MCF 10A (cell line): ENCODE measurements at regions of chr1 and their contacts with region 1.

Region 1: DNA sequence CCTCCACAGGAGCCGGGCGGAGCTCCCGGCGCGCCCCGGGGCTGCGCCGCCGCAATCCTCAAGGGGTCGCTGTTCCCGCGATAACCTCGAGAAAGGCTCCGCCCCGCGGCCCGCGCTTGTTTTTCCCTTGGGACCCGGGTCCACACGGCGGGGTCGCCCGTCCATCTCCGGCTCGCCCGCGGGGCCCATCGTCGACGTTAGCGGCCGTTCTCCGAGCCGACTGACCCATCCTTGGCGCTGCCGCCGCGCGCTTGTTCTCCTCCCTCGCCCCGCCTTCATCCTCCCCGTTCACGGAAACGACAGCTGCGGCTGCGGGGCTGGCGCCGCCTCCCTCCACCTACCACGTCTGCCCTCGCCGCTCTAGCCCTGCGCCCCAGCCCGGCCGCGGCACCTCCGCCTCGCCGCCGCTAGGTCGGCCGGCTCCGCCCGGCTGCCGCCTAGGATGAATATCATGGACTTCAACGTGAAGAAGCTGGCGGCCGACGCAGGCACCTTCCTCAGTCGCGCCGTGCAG is at the start of gene SH3GLB1:
- DNase-seq: peak; percentile 90
- H3K4me3 Mint-ChIP-seq: peak within 1 kb of the TSS; percentile 97
- H3K27ac Mint-ChIP-seq: peak within 1 kb of the TSS; percentile 99
- H3K4me1 Mint-ChIP-seq: peaks cover 35% of the 10 kb centered on the region
- H3K27me3 Mint-ChIP-seq: no peaks in the 10 kb centered on the region
- CTCF ChIP-seq: peak; percentile 85
- total RNA-seq, gene SH3GLB1: 108 and 123 TPM in 2 replicates

Region 2: DNA sequence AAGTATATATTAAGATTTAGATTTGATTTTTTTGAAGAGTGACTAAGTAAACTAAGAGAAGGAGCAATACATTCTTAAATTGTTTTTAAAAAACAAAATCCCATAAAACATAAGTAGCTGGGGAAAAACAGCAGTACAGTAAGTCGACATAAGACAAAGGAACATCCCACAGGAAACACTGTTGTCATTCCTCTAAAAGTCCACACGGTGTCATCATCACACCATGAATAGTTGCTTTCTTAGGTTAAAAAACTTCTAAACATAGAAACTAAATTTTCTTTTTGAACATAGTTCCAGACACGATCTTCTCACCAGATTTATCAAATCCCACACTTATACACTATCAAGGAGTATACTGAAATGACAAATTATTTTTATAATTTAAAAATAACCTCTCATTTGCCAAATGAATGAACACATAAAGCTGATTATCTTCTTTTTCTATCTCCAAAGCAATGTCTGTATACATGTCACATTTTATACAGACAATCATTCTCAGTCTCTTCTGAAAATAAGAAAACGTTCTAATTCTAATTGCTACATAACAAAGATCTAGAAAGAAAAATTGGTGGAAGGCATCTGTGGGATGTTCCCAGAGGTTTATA is 324.2 kb before region 1 on chr1:
- CTCF ChIA-PET with region 1: no interaction called
- POLR2A ChIA-PET with region 1: interaction called, 13 read pairs
- intact Hi-C with region 1: loop called (anchors 10 kb)
- DNase-seq: peak; percentile 73
- H3K4me3 Mint-ChIP-seq: no peak overlapping the region
- H3K27ac Mint-ChIP-seq: no peak overlapping the region
- H3K4me1 Mint-ChIP-seq: no peaks in the 10 kb centered on the region
- H3K27me3 Mint-ChIP-seq: no peaks in the 10 kb centered on the region
- CTCF ChIP-seq: peak; percentile 82

Region 3: DNA sequence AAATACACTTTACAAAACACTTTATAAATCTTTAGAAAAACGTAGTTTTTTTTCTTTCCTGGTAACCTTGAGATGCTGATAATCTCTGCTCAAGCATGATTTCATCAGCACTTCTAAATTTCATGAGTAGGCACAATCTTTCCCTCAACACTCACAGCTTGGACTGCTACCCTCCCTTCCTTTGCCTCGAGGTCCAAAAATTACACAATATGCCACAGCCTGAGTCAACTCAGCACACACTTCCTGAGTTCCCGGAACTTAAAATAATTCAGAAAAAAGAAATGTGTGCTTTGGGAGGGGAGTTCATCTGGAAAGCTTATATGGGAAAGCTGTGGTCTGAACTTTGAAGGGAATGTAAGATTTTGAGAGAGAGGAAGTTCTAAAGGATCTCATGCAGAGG is 274.7 kb before region 1 on chr1:
- CTCF ChIA-PET with region 1: interaction called, 11 read pairs
- POLR2A ChIA-PET with region 1: interaction called, 38 read pairs
- intact Hi-C with region 1: no loop called
- DNase-seq: peak; percentile 96
- H3K4me3 Mint-ChIP-seq: no peak overlapping the region
- H3K27ac Mint-ChIP-seq: no peak overlapping the region
- H3K4me1 Mint-ChIP-seq: peaks cover 13% of the 10 kb centered on the region
- H3K27me3 Mint-ChIP-seq: no peaks in the 10 kb centered on the region
- CTCF ChIP-seq: no peak

Region 4: DNA sequence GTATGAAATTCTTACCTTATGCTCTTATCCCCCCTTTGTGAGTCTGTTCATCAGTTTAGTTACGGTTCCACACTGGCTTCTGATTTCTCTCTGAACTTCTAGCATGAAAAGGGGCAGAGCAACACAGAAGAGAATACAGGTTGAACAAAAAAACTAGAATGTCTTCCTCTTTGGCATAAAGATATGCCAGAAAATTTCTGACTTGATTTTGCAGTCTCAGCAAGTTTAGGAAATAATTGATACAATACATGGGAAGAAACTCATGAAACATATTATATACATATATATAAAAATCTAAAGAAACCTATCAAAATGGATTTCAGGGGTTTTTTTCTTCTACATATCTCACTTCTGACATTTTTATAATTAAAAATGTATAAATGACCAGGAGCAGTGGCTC is 26.9 kb after region 1 on chr1:
- CTCF ChIA-PET with region 1: interaction called, 7 read pairs
- POLR2A ChIA-PET with region 1: interaction called, 12 read pairs
- intact Hi-C with region 1: no loop called
- DNase-seq: no peak
- H3K4me3 Mint-ChIP-seq: no peak overlapping the region
- H3K27ac Mint-ChIP-seq: no peak overlapping the region
- H3K4me1 Mint-ChIP-seq: no peaks in the 10 kb centered on the region
- H3K27me3 Mint-ChIP-seq: no peaks in the 10 kb centered on the region
- CTCF ChIP-seq: no peak

Region 5: DNA sequence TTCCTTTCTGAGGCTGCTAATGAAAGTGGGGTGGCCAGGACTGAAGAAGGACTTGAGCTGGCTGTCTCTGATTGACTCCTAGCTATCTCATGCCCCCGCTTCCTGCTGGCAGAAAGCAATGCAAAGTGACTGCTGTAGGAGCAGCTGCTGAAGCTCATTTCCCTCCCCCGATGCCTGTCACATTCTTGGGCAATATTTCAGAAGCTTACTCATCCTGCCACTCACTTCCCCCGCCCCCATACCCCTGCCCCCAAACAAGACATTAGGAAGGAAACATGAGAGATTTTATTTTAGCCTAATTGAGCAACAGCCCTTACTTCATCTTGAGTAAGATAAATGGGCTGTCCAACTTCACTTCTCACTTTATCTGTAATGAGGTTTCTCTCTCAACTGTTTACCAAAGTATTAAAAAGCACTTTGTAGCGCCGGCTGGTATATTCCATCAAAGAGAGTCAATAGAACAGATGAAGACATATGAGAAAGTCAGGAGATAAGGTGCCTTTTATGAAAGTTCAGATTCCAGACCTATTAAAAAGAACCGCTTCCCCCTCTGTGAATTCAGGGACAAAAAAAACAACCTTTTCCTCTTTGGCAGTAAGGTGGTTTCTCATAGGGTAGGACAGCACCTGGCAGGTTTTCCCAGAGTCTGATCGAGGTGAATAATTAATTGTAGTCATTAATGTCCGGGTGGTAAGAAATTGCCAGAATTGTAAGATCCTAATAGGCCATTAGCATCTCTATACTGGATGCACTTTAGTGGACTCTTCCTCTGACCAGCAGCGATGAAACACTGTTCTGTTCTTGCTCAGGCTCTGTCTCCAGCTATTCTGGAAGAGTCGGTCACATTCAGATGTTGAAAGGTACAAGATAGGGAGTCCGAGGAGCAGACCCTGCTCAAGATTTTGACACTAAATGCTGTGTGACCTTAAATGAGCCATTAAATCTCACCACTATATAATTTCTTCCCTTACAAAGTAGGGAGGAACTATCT is 70.1 kb after region 1 on chr1:
- CTCF ChIA-PET with region 1: interaction called, 8 read pairs
- POLR2A ChIA-PET with region 1: interaction called, 17 read pairs
- intact Hi-C with region 1: no loop called
- DNase-seq: peak; percentile 93
- H3K4me3 Mint-ChIP-seq: peak overlapping the region; percentile 64
- H3K27ac Mint-ChIP-seq: peak overlapping the region; percentile 89
- H3K4me1 Mint-ChIP-seq: peaks cover 48% of the 10 kb centered on the region
- H3K27me3 Mint-ChIP-seq: no peaks in the 10 kb centered on the region
- CTCF ChIP-seq: no peak

Region 6: DNA sequence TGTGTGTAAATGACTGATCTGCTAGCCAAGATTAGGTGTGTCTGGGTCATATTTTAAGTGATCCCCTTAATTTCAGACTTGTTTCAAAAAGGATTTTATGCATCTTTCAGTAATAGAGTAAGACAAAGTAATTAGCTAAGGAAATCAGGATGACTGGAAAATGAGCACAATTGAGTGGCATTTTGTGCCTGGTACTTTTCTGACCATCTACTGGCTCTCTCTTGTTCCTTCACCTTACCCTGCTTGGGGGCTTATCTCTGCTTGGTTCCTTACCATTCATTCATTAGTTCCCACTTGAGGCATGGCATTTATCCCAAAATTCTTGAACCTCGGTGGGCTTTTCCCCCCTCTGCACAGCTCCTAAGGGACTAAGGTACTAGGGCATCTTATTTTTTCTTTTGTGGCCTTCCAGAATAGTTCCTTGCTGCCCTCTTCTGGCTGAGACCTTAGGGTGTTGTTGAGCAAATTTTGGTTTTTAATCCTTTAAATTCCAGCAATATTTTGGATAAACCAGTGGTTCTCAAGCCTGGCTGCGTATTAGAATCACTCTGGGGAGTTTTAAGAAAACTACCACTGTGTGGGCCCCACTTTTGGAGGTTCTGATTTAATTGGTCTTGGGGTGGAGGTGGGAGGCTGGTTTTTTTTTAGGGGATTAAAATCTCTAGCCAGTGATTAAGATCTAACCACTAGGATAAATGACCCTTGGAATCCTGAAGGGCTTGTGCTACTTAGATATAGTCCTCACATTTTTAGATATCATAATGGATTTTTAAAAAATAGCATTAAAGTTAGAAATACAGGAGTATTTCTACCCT is 260.7 kb after region 1 on chr1:
- CTCF ChIA-PET with region 1: interaction called, 4 read pairs
- POLR2A ChIA-PET with region 1: no interaction called
- intact Hi-C with region 1: loop called (anchors 1 kb)
- DNase-seq: peak; percentile 48
- H3K4me3 Mint-ChIP-seq: no peak overlapping the region
- H3K27ac Mint-ChIP-seq: no peak overlapping the region
- H3K4me1 Mint-ChIP-seq: no peaks in the 10 kb centered on the region
- H3K27me3 Mint-ChIP-seq: no peaks in the 10 kb centered on the region
- CTCF ChIP-seq: peak; percentile 74

Region 7: DNA sequence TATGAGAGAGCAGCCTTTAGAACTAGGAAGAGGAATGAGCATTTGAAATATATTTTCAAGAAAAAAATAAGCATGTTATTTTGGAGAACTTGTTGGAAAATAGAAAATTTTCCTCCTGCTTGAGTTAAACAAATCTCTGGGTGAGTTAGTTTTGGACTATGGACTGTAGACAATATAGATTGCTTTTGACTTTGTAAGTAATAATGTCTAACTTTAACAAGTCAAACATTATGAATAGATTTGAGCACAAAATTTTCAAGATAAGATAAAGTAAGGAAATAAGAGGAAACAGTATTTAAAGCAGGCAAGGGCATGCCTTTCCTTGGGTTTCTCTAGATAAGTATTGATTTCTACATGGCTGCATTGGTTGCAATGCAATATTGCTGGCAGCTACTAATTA is 985.0 kb after region 1 on chr1:
- CTCF ChIA-PET with region 1: no interaction called
- POLR2A ChIA-PET with region 1: no interaction called
- intact Hi-C with region 1: no loop called
- DNase-seq: no peak
- H3K4me3 Mint-ChIP-seq: no peak overlapping the region
- H3K27ac Mint-ChIP-seq: no peak overlapping the region
- H3K4me1 Mint-ChIP-seq: no peaks in the 10 kb centered on the region
- H3K27me3 Mint-ChIP-seq: no peaks in the 10 kb centered on the region
- CTCF ChIP-seq: no peak